Activated CD4-positive, alpha-beta T cell treated with anti-CD3 and anti-CD28 coated beads, Interleukin-2, amount 10 ng/mL, durations not matched to agents 24 days and 14 days (primary cell): ENCODE measurements at regions of chr1 and their contacts with region 1.

Region 1: GRCh38 chr1:150561974-150562445 is 12.8 kb downstream of the ADAMTSL4 start:
- DNase-seq: peak; percentile 98
- H3K4me3 Mint-ChIP-seq: peak overlapping the region; percentile 95
- H3K27ac Mint-ChIP-seq: peak overlapping the region; percentile 100
- H3K4me1 Mint-ChIP-seq: peaks cover 55% of the 10 kb centered on the region
- H3K27me3 Mint-ChIP-seq: no peaks in the 10 kb centered on the region

Region 2: GRCh38 chr1:150259758-150260669 is 302.0 kb before region 1 on chr1:
- intact Hi-C with region 1: loop called (anchors 2 kb)
- DNase-seq: no peak
- H3K4me3 Mint-ChIP-seq: no peak overlapping the region
- H3K27ac Mint-ChIP-seq: no peak overlapping the region
- H3K4me1 Mint-ChIP-seq: peaks cover 18% of the 10 kb centered on the region
- H3K27me3 Mint-ChIP-seq: peaks cover 49% of the 10 kb centered on the region

Region 3: GRCh38 chr1:150271291-150271959 is 290.6 kb before region 1 on chr1:
- intact Hi-C with region 1: no loop called
- DNase-seq: no peak
- H3K4me3 Mint-ChIP-seq: no peak overlapping the region
- H3K27ac Mint-ChIP-seq: no peak overlapping the region
- H3K4me1 Mint-ChIP-seq: peaks cover 26% of the 10 kb centered on the region
- H3K27me3 Mint-ChIP-seq: no peaks in the 10 kb centered on the region

Region 4: GRCh38 chr1:150613061-150613920 is 51.3 kb after region 1 on chr1:
- intact Hi-C with region 1: loop called (anchors 1 kb)
- DNase-seq: peak; percentile 84
- H3K4me3 Mint-ChIP-seq: peak overlapping the region; percentile 78
- H3K27ac Mint-ChIP-seq: peak overlapping the region; percentile 95
- H3K4me1 Mint-ChIP-seq: peaks cover 55% of the 10 kb centered on the region
- H3K27me3 Mint-ChIP-seq: no peaks in the 10 kb centered on the region

Region 5: DNA sequence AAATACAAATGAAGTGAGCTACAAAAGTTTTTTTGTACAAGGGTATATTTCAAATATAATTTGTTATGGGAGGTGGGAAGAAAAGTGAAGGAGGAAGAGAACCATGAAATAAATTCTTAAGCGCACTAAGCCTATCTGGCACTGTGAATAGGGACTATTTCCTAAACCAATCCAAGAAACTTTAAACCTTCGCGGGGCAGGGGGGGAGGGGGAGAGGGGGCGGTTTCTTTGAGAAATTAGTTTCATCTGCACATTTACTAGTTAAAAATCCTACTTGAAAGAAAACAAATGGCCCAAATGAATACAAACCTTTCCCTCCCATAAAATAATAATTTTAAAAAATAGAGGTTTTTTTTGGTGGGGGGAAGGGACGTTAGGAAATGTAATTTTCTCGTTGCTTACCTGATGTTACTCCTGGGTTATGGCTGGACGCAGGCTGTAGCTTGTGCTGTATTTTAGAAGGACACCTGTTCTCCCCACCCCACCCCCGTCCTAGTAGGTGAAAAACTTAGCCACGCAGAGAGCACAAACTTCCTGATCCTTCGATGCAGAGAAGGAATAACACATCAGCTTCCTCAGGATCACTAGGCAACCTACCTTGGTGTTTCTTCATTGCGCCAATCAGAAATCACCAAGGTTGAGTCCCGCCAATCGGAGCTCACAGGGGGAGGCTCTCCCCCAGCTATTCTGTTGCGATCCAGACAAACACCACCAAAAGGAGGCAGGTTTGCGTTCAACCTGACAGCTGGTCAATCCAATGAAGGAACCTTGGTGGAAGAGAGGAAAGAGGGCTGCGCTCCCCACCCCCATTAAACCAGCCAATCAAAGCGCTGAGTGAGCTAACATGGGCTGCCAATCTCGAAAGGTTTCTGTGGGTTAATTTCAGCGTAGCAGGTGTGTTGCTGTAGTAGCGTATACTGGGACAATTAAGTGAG is 134.8 kb after region 1 on chr1 and contains the start of gene GOLPH3L:
- intact Hi-C with region 1: loop called (anchors 2 kb)
- DNase-seq: peak; percentile 97
- H3K4me3 Mint-ChIP-seq: peak within 1 kb of the TSS; percentile 90
- H3K27ac Mint-ChIP-seq: peak within 1 kb of the TSS; percentile 92
- H3K4me1 Mint-ChIP-seq: peaks cover 19% of the 10 kb centered on the region
- H3K27me3 Mint-ChIP-seq: peaks cover 11% of the 10 kb centered on the region
- total RNA-seq, gene GOLPH3L: 19.6 and 19.8 TPM in 2 replicates

Region 6: DNA sequence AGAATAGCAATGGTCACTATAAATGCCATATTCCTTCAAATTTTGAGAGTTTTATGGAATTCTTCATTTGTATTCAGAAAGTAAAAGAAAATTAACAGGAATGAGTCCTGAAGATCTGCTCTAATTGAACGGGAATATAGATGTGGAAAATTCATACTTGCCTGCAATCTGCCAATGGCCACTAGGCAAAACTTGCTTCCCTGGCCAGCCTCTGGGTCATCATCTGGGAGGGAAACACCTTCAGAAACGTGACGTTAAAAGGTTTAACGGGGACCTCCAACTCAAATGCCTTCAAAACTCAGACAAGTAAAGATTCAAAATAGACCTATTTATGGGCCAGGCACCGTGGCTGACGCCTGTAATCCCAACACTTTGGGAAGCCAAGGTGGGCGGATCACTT is 267.7 kb after region 1 on chr1:
- intact Hi-C with region 1: no loop called
- DNase-seq: no peak
- H3K4me3 Mint-ChIP-seq: no peak overlapping the region
- H3K27ac Mint-ChIP-seq: no peak overlapping the region
- H3K4me1 Mint-ChIP-seq: no peaks in the 10 kb centered on the region
- H3K27me3 Mint-ChIP-seq: no peaks in the 10 kb centered on the region

Region 7: DNA sequence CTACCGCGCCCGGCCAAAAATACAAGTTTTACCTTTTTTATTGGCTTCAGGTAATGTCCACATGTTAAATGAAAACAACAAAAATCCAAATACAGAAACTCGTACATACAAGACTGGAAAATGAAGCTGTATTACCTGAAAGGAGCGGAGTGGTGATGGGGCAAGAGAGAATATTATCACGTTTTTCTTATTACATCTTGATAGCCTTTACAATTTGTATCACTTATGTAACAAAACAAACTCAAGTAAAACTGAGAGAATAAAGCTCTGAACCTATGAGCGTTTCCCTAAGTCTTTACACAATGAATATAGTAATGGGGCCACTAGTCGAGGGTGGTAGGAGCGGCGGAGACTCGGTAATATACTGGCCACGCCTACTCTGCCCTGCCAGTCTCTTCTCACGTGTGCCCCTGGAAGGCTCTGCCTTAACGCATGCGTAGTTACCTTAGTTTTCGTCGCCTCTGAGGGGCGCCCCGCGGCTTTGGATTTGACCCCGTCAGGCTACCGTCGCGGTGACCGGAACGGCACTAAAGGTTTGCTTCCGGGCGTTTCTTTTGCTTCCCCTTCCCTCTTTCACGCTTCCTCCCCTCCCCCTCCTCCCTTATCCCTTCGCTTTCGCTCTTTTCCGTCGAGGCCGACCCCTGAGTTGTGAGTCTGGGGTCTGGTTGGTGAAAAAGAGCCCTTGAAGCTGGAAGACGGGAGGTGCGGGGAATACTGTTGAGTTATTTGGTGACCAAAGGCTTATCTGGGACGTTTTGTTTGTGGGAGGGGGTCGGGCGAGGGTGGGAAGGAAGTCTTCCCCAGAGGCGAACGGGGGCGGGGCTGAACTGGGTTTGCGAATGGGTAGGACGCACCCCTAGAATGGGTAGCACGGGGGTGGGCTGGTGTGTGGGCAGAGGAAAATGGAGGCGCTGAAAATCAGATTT is 364.1 kb after region 1 on chr1 and contains the start of gene SETDB1:
- intact Hi-C with region 1: loop called (anchors 1 kb)
- DNase-seq: peak; percentile 97
- H3K4me3 Mint-ChIP-seq: peak within 1 kb of the TSS; percentile 93
- H3K27ac Mint-ChIP-seq: peak within 1 kb of the TSS; percentile 97
- H3K4me1 Mint-ChIP-seq: peaks cover 28% of the 10 kb centered on the region
- H3K27me3 Mint-ChIP-seq: no peaks in the 10 kb centered on the region
- total RNA-seq, gene SETDB1: 56.2 and 62.3 TPM in 2 replicates

Region 8: DNA sequence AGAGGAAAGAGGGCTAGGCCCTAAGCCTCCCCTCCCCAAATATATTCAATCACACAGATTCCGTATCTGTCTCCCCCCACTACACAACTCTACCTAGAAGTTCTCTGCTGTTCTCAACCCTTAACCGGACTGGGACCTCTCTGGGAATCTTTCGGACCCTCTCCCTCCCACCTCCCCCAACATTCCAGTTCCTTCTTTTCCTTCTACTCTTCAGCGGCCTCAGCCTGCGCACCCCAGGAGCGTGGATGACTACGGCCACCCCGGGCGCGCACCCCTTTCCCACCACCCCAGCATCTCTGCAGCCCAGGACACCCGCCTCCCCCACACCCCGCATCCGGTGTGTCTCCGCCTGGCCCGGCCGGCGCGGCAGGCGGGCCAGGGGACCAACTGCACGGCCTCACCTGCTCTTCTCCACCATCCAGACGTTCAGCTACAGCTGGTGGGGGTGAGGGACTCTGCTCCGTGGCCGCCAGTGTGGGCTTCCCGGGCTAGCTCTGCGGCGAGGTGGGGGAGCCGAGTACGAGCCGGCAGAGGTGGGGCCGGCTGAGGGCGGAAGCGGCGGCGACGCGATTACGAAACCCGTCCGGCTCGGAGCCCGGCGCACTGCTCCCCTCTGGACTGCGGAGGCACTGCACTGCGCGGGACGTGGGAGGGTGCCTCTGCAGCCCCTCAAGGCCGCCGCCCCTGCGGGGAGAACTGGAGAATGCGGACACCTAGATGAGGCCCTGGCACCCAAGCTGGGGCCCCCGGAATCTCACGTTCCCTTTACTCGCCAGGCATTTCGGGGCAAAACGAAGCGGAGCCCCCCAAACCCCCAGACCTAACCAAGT is 497.3 kb after region 1 on chr1 and contains the start of gene CDC42SE1:
- intact Hi-C with region 1: loop called (anchors 5 kb)
- DNase-seq: peak; percentile 96
- H3K4me3 Mint-ChIP-seq: peak within 1 kb of the TSS; percentile 99
- H3K27ac Mint-ChIP-seq: peak within 1 kb of the TSS; percentile 99
- H3K4me1 Mint-ChIP-seq: peaks cover 63% of the 10 kb centered on the region
- H3K27me3 Mint-ChIP-seq: no peaks in the 10 kb centered on the region
- total RNA-seq, gene CDC42SE1: 189 and 190 TPM in 2 replicates